ENCODE measurements at regions of chr5 and their contacts with region 1.

Region 1: DNA sequence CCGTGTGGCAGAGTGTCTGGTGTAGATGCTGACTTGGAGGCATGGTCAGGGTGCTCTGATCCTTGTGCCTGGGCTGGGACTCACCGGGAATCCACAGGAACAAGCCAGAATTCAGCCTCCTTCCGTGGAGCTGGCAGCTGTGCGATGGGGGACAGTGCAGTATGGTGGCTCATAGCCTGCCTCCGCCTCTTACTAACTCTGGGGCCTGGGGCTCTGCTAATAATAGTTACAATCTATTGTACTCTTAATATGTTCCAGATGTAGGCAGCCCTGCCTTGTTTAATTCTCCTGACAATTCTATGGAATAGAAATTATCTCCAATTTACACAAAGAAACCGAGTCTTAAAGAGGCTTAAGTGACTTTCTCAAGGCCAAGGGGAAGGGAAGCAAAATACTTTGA is 77.6 kb downstream of the PCDH1 start:
- DNase-seq: no peak
- H3K4me3 ChIP-seq: no peak overlapping the region
- H3K27ac ChIP-seq: no peak overlapping the region
- H3K27me3 ChIP-seq: no peaks in the 10 kb centered on the region
- CTCF ChIP-seq: no peak

Region 2: GRCh38 chr5:141716009-141716408 is 84.6 kb before region 1 on chr5:
- intact Hi-C with region 1: loop called in 1 of 2 experiments (anchors 5 kb)
- DNase-seq: peak in 2 of 10 donors; percentile 41 to 51
- H3K4me3 ChIP-seq: no peak overlapping the region
- H3K27ac ChIP-seq: peak overlapping the region in 9 of 59 donors; percentile 20 to 60 (median 46)
- H3K27me3 ChIP-seq: no peaks in the 10 kb centered on the region
- CTCF ChIP-seq: no peak

Region 3: GRCh38 chr5:141762790-141763368 is 37.7 kb before region 1 on chr5:
- intact Hi-C with region 1: loop called in 1 of 2 experiments (anchors 5 kb)
- DNase-seq: no peak
- H3K4me3 ChIP-seq: no peak overlapping the region
- H3K27ac ChIP-seq: peak overlapping the region in 51 of 59 donors; percentile 3 to 86 (median 54)
- H3K27me3 ChIP-seq: no peaks in the 10 kb centered on the region
- CTCF ChIP-seq: no peak

Region 4: GRCh38 chr5:141778206-141778605 is 22.4 kb before region 1 on chr5:
- intact Hi-C with region 1: no loop called
- DNase-seq: peak in 5 of 10 donors; percentile 42 to 76 (median 62)
- H3K4me3 ChIP-seq: no peak overlapping the region
- H3K27ac ChIP-seq: peak overlapping the region in 51 of 59 donors; percentile 10 to 91 (median 68)
- H3K27me3 ChIP-seq: no peaks in the 10 kb centered on the region
- CTCF ChIP-seq: no peak